Caco-2 (cell line): ENCODE measurements at regions of chr3 and their contacts with region 1.

Region 1: DNA sequence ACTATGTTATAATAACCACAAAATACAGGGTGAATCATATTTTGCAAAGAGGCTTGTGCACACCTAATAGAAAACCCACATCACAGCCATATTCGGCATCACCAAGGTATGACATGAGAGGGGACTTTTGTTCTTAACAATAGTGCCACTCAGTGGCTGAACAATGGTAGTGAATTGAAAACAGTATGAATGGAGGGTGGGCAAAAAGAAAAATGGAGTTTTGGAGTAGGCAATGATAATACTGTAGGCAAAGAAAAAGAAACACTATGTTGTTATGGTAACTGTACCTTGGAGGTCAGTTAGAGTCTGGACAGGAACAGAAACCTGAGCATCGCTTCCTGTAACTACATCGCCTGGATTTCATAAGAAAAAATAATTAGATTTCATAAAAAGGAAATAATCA is 348.6 kb downstream of the PLCL2 start:
- DNase-seq: peak in 1 of 2 experiments; percentile 46
- H3K4me3 ChIP-seq: no peak overlapping the region
- H3K4me3 Mint-ChIP-seq: no peak overlapping the region
- H3K27ac Mint-ChIP-seq: no peak overlapping the region
- H3K4me1 ChIP-seq: peaks cover 6% of the 10 kb centered on the region
- H3K4me1 Mint-ChIP-seq: no peaks in the 10 kb centered on the region
- H3K27me3 ChIP-seq: no peaks in the 10 kb centered on the region
- H3K27me3 Mint-ChIP-seq: no peaks in the 10 kb centered on the region
- CTCF ChIP-seq: peak; percentile 59 to 60

Region 2: GRCh38 chr3:16658004-16658920 is 575.1 kb before region 1 on chr3:
- CTCF ChIA-PET with region 1: no interaction called
- POLR2A ChIA-PET with region 1: no interaction called
- intact Hi-C with region 1: no loop called
- DNase-seq: no peak
- H3K4me3 ChIP-seq: no peak overlapping the region
- H3K4me3 Mint-ChIP-seq: no peak overlapping the region
- H3K27ac Mint-ChIP-seq: no peak overlapping the region
- H3K4me1 ChIP-seq: no peaks in the 10 kb centered on the region
- H3K4me1 Mint-ChIP-seq: no peaks in the 10 kb centered on the region
- H3K27me3 ChIP-seq: no peaks in the 10 kb centered on the region
- H3K27me3 Mint-ChIP-seq: peaks cover 7% of the 10 kb centered on the region
- CTCF ChIP-seq: peak in 1 of 2 experiments; percentile 20

Region 3: DNA sequence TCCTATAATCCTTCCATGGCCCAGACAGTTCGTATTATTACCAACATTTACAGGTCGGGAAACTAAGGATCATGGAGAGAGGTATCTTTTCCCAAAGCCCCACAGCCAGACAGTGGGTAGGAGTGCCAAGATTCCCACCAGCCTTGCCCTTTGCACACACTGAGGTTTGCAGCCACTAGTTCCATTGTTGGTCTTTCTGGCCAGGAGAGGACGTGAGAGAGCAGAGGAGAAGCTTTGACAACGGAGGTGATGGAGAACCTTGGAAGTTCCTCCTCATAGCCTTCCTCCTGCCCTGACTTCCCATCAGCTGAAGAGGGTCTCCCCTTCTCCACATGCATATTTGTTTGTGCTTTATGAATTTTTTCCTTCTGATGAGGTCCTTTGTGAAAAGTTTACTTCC is 399.2 kb before region 1 on chr3:
- CTCF ChIA-PET with region 1: no interaction called
- POLR2A ChIA-PET with region 1: no interaction called
- intact Hi-C with region 1: loop called (anchors 2 kb)
- DNase-seq: no peak
- H3K4me3 ChIP-seq: no peak overlapping the region
- H3K4me3 Mint-ChIP-seq: no peak overlapping the region
- H3K27ac Mint-ChIP-seq: no peak overlapping the region
- H3K4me1 ChIP-seq: no peaks in the 10 kb centered on the region
- H3K4me1 Mint-ChIP-seq: no peaks in the 10 kb centered on the region
- H3K27me3 ChIP-seq: no peaks in the 10 kb centered on the region; the same call in 1 of the 2 replicates
- H3K27me3 Mint-ChIP-seq: peaks cover 14% of the 10 kb centered on the region
- CTCF ChIP-seq: no peak

Region 4: DNA sequence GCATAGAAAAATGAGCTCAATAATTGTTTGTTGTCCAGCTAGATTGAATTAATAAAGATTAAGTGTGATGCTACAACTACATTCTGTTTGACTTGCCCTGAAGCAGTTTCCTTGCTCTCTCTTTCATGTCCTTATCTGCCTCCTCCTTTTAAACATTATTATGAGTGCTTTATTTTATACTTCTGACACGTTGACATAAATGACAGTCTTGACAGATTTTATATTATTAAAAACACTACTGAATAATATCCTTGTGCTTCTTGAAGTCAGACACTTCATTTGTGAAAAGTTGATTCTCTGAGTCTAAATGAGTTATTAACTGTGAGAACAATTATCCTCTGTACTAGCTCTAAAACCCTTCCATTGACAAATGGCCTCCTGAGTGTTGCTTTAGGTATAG is 290.4 kb before region 1 on chr3:
- CTCF ChIA-PET with region 1: no interaction called
- POLR2A ChIA-PET with region 1: no interaction called
- intact Hi-C with region 1: loop called (anchors 2 kb)
- DNase-seq: no peak
- H3K4me3 ChIP-seq: no peak overlapping the region
- H3K4me3 Mint-ChIP-seq: no peak overlapping the region
- H3K27ac Mint-ChIP-seq: no peak overlapping the region
- H3K4me1 ChIP-seq: no peaks in the 10 kb centered on the region
- H3K4me1 Mint-ChIP-seq: no peaks in the 10 kb centered on the region
- H3K27me3 ChIP-seq: no peaks in the 10 kb centered on the region
- H3K27me3 Mint-ChIP-seq: peaks cover 18% of the 10 kb centered on the region
- CTCF ChIP-seq: no peak

Region 5: DNA sequence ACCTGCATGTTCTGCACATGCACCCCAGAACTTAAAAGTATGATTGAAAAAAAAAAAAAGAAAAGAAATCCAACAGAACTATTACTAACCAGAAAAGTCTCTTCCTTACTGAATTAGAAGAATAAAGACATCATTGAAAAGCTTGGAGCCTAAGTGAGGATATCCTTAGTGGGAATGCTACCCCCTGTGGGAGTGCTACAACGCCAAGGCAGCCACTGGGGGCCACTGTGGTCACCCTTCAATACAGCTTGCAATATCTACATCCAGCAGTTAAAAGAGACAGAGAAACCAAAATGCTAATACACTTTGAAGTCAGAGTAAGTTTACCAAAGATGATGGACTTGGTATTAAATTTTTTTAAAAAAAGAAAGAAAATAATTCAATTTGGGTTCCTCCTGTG is 56.6 kb before region 1 on chr3:
- CTCF ChIA-PET with region 1: no interaction called
- POLR2A ChIA-PET with region 1: no interaction called
- intact Hi-C with region 1: loop called (anchors 2 kb)
- DNase-seq: no peak
- H3K4me3 ChIP-seq: no peak overlapping the region
- H3K4me3 Mint-ChIP-seq: no peak overlapping the region
- H3K27ac Mint-ChIP-seq: no peak overlapping the region
- H3K4me1 ChIP-seq: no peaks in the 10 kb centered on the region
- H3K4me1 Mint-ChIP-seq: no peaks in the 10 kb centered on the region
- H3K27me3 ChIP-seq: no peaks in the 10 kb centered on the region
- H3K27me3 Mint-ChIP-seq: no peaks in the 10 kb centered on the region
- CTCF ChIP-seq: peak in 1 of 2 experiments; percentile 21